GM12878 (cell line): ENCODE measurements at regions of chr16 and their contacts with region 1.

Region 1: GRCh38 chr16:71808593-71809459 is at the start of gene AP1G1:
- DNase-seq: peak; percentile 96
- ATAC-seq: peak; percentile 90
- H3K4me3 ChIP-seq: peak within 1 kb of the TSS; percentile 93
- H3K27ac ChIP-seq: peak within 1 kb of the TSS; percentile 100
- H3K4me1 ChIP-seq: peaks cover 8% of the 10 kb centered on the region
- H3K27me3 ChIP-seq: no peaks in the 10 kb centered on the region
- CTCF ChIP-seq: no peak
- EP300 ChIP-seq: peak in 1 of 2 experiments; percentile 19; a peak in 1 of 4 replicates
- POLR2A ChIP-seq: peak; percentile 92
- RAD21 ChIP-seq: peak; percentile 13; the same call in 1 of the 2 replicates
- polyA plus RNA-seq, gene AP1G1: 5.9 to 8.4 TPM

Region 2: DNA sequence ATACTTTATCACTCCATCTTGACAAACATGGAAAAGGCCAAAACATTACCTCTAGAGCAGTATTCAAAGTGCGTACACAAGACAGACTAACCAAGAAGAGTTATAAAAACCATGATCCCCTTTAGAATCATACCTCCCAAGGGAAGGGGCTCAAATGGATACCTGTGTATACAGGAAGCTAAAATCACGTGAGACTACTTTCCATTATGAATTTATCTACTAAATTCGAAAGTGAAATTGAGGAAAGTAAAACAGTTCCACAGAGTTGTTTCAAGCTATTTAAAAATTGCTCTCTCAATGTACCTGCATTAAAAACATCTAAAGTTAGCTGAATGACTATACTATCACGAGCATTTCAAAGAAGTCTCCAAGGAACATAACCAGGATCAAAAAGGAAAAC is 32.9 kb before region 1 on chr16:
- CTCF ChIA-PET with region 1: no interaction called
- POLR2A ChIA-PET with region 1: interaction called, 12 read pairs
- RAD21 ChIA-PET with region 1: interaction called, 3 read pairs
- SMC1A ChIA-PET with region 1: interaction called, 10 read pairs
- in situ Hi-C with region 1: no loop called
- intact Hi-C with region 1: no loop called
- DNase-seq: peak; percentile 15
- ATAC-seq: peak; percentile 80
- H3K4me3 ChIP-seq: no peak overlapping the region
- H3K27ac ChIP-seq: peak overlapping the region; percentile 44; the same call in 1 of the 2 replicates
- H3K4me1 ChIP-seq: peaks cover 9% of the 10 kb centered on the region
- H3K27me3 ChIP-seq: no peaks in the 10 kb centered on the region
- CTCF ChIP-seq: no peak
- EP300 ChIP-seq: no peak
- POLR2A ChIP-seq: no peak
- RAD21 ChIP-seq: no peak

Region 3: GRCh38 chr16:71845639-71846430 is 37.0 kb after region 1 on chr16 and contains the start of gene ATXN1L:
- CTCF ChIA-PET with region 1: interaction called, 4 read pairs
- POLR2A ChIA-PET with region 1: interaction called, 38 read pairs
- RAD21 ChIA-PET with region 1: interaction called, 43 read pairs
- SMC1A ChIA-PET with region 1: interaction called, 15 read pairs
- in situ Hi-C with region 1: no loop called
- intact Hi-C with region 1: loop called (anchors 2 kb)
- DNase-seq: peak; percentile 84
- ATAC-seq: peak; percentile 86
- H3K4me3 ChIP-seq: peak within 1 kb of the TSS; percentile 92
- H3K27ac ChIP-seq: peak within 1 kb of the TSS; percentile 90
- H3K4me1 ChIP-seq: peaks cover 44% of the 10 kb centered on the region
- H3K27me3 ChIP-seq: no peaks in the 10 kb centered on the region
- CTCF ChIP-seq: no peak
- EP300 ChIP-seq: peak; percentile 49 to 70; a peak in 2 of 4 replicates
- POLR2A ChIP-seq: peak; percentile 94
- RAD21 ChIP-seq: 0 out of 2 replicates have a peak, but pooled peaks have one; percentile 16
- polyA plus RNA-seq, gene ATXN1L: 1.8 to 2.0 TPM

Region 4: GRCh38 chr16:71853413-71853812 is 44.6 kb after region 1 on chr16:
- CTCF ChIA-PET with region 1: no interaction called
- POLR2A ChIA-PET with region 1: interaction called, 4 read pairs
- RAD21 ChIA-PET with region 1: interaction called, 12 read pairs
- SMC1A ChIA-PET with region 1: interaction called, 4 read pairs
- in situ Hi-C with region 1: no loop called
- intact Hi-C with region 1: loop called (anchors 2 kb)
- DNase-seq: no peak
- ATAC-seq: peak; percentile 88
- H3K4me3 ChIP-seq: peak overlapping the region; percentile 17
- H3K27ac ChIP-seq: peak overlapping the region; percentile 86
- H3K4me1 ChIP-seq: peaks cover 32% of the 10 kb centered on the region
- H3K27me3 ChIP-seq: no peaks in the 10 kb centered on the region
- CTCF ChIP-seq: no peak
- EP300 ChIP-seq: peak; percentile 27 to 66; a peak in 2 of 4 replicates
- POLR2A ChIP-seq: no peak
- RAD21 ChIP-seq: 0 out of 2 replicates have a peak, but pooled peaks have one; percentile 4

Region 5: DNA sequence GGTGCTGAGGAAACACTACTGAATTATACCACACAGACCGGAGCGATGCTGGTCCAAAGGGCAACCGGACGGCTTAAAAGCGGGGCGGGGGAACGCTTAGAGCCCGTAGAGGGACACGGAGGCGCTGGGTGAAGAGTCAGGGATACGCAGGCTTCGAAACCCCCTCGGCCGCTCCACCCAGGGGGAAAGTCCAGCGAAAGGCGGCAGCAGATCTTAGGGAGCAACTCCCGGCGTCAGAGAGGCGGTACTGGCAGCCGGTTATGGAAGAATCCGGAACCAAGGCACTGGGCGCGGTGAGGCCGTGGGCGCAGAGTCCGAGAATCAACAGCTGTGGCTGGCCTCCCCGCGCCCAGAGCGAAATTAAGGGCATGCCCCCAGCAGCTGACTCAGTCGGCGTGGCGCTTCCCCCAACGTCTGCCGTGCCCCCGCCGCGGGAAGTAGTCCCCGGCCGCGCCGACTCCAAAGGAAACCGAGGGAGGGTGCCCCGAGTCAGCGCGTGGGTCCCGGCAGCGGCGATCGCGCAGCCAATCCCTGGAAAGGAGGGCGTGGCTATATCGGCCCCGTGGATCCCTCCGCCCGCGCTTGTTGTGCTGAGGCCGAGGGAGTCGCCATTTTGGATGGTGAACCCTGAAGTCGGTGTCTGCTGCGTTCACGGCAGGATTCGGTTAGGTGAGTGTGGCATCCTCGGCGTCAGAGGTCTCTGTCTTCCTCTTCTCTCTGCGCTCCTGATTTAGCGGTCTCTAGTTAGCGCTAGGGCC is 86.3 kb after region 1 on chr16 and contains the start of gene IST1:
- CTCF ChIA-PET with region 1: interaction called, 3 read pairs
- POLR2A ChIA-PET with region 1: interaction called, 4 read pairs
- RAD21 ChIA-PET with region 1: interaction called, 7 read pairs
- SMC1A ChIA-PET with region 1: interaction called, 3 read pairs
- in situ Hi-C with region 1: loop called (anchors 5 kb)
- intact Hi-C with region 1: loop called (anchors 2 kb)
- DNase-seq: peak; percentile 85
- ATAC-seq: peak; percentile 90
- H3K4me3 ChIP-seq: peak within 1 kb of the TSS; percentile 91
- H3K27ac ChIP-seq: peak within 1 kb of the TSS; percentile 98
- H3K4me1 ChIP-seq: no peaks in the 10 kb centered on the region
- H3K27me3 ChIP-seq: no peaks in the 10 kb centered on the region
- CTCF ChIP-seq: no peak
- EP300 ChIP-seq: peak in 1 of 2 experiments; percentile 33; a peak in 2 of 4 replicates
- POLR2A ChIP-seq: peak; percentile 93
- RAD21 ChIP-seq: no peak
- polyA plus RNA-seq, gene IST1: 97.3 to 136 TPM

Region 6: DNA sequence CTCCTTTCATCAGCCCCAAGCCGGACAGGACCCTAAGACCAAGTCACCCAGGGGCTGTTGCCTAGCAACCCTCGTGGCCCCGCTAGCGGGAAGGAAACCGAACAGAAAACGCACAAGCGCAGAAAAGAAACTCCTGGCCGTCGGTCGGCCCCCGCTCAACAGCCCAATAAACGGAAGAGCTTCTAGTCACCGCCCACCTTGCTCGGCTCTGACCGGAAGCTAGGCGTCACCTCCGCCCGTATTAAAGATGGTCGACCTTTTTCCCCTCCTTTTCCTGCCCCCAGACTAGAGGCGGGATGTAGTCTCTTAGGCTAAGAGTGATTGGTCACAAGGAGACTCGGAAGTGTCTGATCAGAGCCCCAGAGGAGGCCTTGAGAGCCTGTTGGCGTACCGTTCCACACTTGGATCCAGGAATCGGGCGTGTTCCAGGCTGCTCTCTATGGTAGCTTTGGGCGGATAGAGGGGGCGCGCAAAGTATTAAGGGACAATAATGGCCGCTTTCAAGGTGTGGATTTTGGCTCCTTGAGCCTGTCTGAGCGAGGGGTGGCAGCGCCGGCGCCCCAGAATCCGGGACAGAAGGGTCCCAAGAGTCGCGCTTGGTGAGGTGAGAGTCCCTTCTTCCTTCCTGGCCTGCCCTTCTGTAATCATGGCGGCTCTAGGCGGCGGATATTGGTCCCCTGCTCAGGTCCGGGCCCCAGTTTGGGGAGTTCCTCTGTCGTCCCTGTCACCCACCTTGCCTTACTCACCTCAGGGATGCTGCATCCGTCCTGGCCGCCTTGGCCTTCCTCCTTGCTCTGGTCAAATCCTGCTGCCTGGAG is 284.8 kb after region 1 on chr16 and contains the starts of genes DHX38 and TXNL4B:
- CTCF ChIA-PET with region 1: interaction called, 3 read pairs
- POLR2A ChIA-PET with region 1: no interaction called
- RAD21 ChIA-PET with region 1: no interaction called
- SMC1A ChIA-PET with region 1: no interaction called
- in situ Hi-C with region 1: no loop called
- intact Hi-C with region 1: loop called (anchors 5 kb)
- DNase-seq: peak; percentile 98
- ATAC-seq: peak; percentile 97
- H3K4me3 ChIP-seq: peak within 1 kb of the TSS; percentile 98
- H3K27ac ChIP-seq: peak within 1 kb of the TSS; percentile 91
- H3K4me1 ChIP-seq: peaks cover 11% of the 10 kb centered on the region
- H3K27me3 ChIP-seq: no peaks in the 10 kb centered on the region
- CTCF ChIP-seq: no peak
- EP300 ChIP-seq: 0 out of 4 replicates have a peak, but pooled peaks of 1 of the 2 experiments have one; percentile 15
- POLR2A ChIP-seq: peak; percentile 86
- RAD21 ChIP-seq: no peak
- polyA plus RNA-seq, gene DHX38: 2.1 to 5.8 TPM
- polyA plus RNA-seq, gene TXNL4B: 13.8 to 15.5 TPM

Region 7: DNA sequence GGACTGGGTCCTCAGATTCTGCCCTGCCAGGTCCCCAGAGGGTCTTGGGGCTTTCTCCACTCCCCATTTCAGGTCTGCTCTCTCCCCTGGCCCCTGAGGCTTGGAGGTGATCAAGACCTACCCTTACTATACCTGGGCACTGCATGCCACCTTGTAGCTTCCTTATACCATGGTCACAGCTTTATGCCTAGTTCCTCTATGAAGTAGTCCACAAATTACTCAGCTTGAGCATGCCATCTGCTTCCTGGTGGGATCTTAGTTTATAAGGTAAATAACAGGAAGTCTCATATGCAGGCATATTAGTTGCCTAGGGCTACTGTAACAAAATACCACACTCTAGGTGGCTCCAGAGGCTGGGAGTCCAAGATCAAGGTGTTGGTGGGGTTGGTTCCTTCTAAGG is 374.1 kb after region 1 on chr16:
- CTCF ChIA-PET with region 1: no interaction called
- POLR2A ChIA-PET with region 1: no interaction called
- RAD21 ChIA-PET with region 1: no interaction called
- SMC1A ChIA-PET with region 1: no interaction called
- in situ Hi-C with region 1: no loop called
- intact Hi-C with region 1: no loop called
- DNase-seq: no peak
- ATAC-seq: 0 out of 3 replicates have a peak, but pooled peaks have one; percentile 23
- H3K4me3 ChIP-seq: no peak overlapping the region
- H3K27ac ChIP-seq: no peak overlapping the region
- H3K4me1 ChIP-seq: no peaks in the 10 kb centered on the region
- H3K27me3 ChIP-seq: no peaks in the 10 kb centered on the region
- CTCF ChIP-seq: no peak
- EP300 ChIP-seq: no peak
- POLR2A ChIP-seq: no peak
- RAD21 ChIP-seq: no peak